CD4-positive, alpha-beta T cell (primary cell): ENCODE measurements at regions of chr6 and their contacts with region 1.

Region 1: DNA sequence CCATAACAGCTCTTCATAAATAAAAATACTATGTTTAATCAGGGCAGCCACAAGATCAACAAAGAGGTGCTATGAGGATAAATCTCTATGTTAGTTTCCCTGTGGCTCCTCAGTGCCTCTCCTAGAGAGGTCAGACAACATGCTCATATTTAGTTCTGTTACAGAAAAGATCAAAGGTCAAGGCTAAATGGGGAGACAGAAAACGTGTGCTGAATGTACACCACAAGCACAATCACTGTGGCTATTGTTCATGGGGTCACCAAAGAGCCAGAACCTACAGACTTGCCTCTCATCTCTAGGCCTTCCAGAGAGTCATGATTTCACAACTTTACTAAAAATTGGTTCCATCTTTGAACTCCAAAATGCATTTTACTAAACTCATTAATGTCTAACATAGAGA is 409.8 kb downstream of the HACE1 start:
- DNase-seq: no peak
- ATAC-seq: no peak
- H3K4me3 ChIP-seq: no peak overlapping the region
- H3K4me3 Mint-ChIP-seq: no peak overlapping the region
- H3K27ac ChIP-seq: no peak overlapping the region
- H3K27ac Mint-ChIP-seq: no peak overlapping the region
- H3K4me1 ChIP-seq: no peaks in the 10 kb centered on the region
- H3K4me1 Mint-ChIP-seq: no peaks in the 10 kb centered on the region
- H3K27me3 ChIP-seq: no peaks in the 10 kb centered on the region
- H3K27me3 Mint-ChIP-seq: no peaks in the 10 kb centered on the region
- CTCF ChIP-seq: no peak

Region 2: GRCh38 chr6:104357928-104358327 is 92.0 kb before region 1 on chr6:
- CTCF ChIA-PET with region 1: no interaction called
- POLR2A ChIA-PET with region 1: no interaction called
- intact Hi-C with region 1: no loop called
- DNase-seq: no peak
- ATAC-seq: no peak
- H3K4me3 ChIP-seq: no peak overlapping the region
- H3K4me3 Mint-ChIP-seq: no peak overlapping the region
- H3K27ac ChIP-seq: no peak overlapping the region
- H3K27ac Mint-ChIP-seq: no peak overlapping the region
- H3K4me1 ChIP-seq: no peaks in the 10 kb centered on the region
- H3K4me1 Mint-ChIP-seq: no peaks in the 10 kb centered on the region
- H3K27me3 ChIP-seq: no peaks in the 10 kb centered on the region
- H3K27me3 Mint-ChIP-seq: no peaks in the 10 kb centered on the region
- CTCF ChIP-seq: no peak

Region 3: GRCh38 chr6:104462809-104463599 is 13.1 kb after region 1 on chr6:
- CTCF ChIA-PET with region 1: no interaction called
- POLR2A ChIA-PET with region 1: no interaction called
- intact Hi-C with region 1: loop called in 1 of 2 experiments (anchors 1 kb)
- DNase-seq: no peak
- ATAC-seq: no peak
- H3K4me3 ChIP-seq: no peak overlapping the region
- H3K4me3 Mint-ChIP-seq: no peak overlapping the region
- H3K27ac ChIP-seq: no peak overlapping the region
- H3K27ac Mint-ChIP-seq: no peak overlapping the region
- H3K4me1 ChIP-seq: no peaks in the 10 kb centered on the region
- H3K4me1 Mint-ChIP-seq: no peaks in the 10 kb centered on the region
- H3K27me3 ChIP-seq: no peaks in the 10 kb centered on the region
- H3K27me3 Mint-ChIP-seq: no peaks in the 10 kb centered on the region
- CTCF ChIP-seq: no peak